A673 (cell line): ENCODE measurements at regions of chr11 and their contacts with region 1.

Region 1: GRCh38 chr11:727859-728748 is 19.2 kb upstream of the TALDO1 start:
- DNase-seq: peak; percentile 55
- H3K4me3 ChIP-seq: no peak overlapping the region
- H3K27ac ChIP-seq: no peak overlapping the region
- H3K4me1 ChIP-seq: no peaks in the 10 kb centered on the region
- H3K27me3 ChIP-seq: peaks cover 8% of the 10 kb centered on the region
- CTCF ChIP-seq: peak; percentile 91

Region 2: DNA sequence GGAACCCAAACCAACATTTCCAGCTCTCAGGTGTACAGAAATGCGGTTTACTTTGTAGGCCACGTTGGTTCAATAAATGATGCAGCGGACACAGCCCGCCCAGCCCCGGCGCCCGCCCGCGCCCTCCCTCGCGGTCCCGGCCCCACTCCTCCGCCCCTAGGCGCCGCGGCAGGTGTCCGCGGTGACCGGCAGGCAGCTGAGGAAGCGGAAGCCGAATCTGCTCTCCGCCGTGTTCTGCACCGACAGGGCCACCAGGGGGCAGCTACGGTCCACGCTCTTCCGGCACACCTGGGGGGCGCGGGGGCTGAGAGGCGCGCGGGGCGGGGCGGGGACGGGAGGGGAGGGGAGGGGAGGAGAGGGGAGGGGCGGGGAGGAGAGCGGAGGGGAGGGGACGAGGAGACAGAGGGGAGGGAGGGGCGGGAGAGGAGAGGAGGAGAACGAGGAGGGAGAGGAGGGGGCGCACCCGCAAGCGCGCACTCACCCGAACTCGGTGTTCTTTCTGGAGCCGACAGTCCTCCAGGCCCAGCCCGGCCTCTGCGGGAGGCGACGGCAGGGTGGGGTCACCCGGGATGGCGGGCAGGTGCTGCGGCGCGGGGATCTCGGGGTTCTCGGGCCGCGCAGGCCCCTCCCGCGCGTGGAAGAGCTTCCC is 173.2 kb before region 1 on chr11:
- CTCF ChIA-PET with region 1: interaction called, 3 read pairs
- POLR2A ChIA-PET with region 1: no interaction called
- intact Hi-C with region 1: loop called (anchors 10 kb)
- DNase-seq: peak; percentile 80
- H3K4me3 ChIP-seq: peak overlapping the region; percentile 50
- H3K27ac ChIP-seq: no peak overlapping the region
- H3K4me1 ChIP-seq: peaks cover 8% of the 10 kb centered on the region
- H3K27me3 ChIP-seq: peaks cover 22% of the 10 kb centered on the region
- CTCF ChIP-seq: peak; percentile 52; the same call in 1 of the 2 replicates

Region 3: DNA sequence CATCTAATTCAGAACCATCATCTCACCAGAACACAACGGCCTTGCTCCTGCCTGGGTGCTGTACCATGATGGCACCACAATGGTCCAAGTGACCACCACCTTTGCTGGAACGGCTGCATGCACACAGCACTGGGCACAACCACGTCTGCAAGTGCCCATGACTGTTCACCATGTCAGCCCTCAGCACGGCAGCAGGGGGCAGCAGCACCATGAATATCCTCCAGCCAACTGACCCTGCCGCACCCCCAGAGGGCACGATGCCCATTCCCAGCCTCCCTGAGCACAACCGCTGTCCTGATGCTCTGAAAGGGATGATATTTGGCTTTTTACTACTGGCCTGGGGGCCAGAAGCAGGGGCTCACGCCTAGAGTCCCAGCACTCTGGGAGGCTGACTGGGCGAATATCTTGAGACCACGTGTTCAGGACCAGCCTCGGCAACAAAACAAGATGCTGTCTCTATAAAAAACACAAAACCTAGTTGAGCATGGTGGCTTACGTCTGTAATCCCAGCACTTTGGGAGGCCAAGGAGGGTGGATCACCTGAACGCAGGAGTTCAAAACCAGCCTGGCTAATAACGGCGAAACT is 65.3 kb before region 1 on chr11:
- CTCF ChIA-PET with region 1: interaction called, 3 read pairs
- POLR2A ChIA-PET with region 1: no interaction called
- intact Hi-C with region 1: loop called (anchors 5 kb)
- DNase-seq: peak; percentile 41
- H3K4me3 ChIP-seq: no peak overlapping the region
- H3K27ac ChIP-seq: no peak overlapping the region
- H3K4me1 ChIP-seq: peaks cover 18% of the 10 kb centered on the region
- H3K27me3 ChIP-seq: no peaks in the 10 kb centered on the region
- CTCF ChIP-seq: peak; percentile 69

Region 4: DNA sequence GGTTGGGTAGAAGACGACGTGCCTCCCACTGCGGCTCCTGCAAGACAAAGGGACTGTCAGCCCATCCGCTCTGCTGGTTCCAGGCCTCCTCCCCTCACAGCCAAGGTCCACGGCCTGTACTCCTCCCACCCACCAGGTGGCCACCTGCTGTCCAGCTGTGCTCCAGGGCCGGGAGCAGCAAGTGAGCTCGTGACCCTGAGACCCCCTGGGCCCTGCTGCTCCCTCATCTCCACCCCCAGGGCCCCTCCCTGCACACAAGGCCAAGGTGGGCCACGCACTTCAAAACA is 142.0 kb after region 1 on chr11:
- CTCF ChIA-PET with region 1: no interaction called
- POLR2A ChIA-PET with region 1: no interaction called
- intact Hi-C with region 1: no loop called
- DNase-seq: no peak
- H3K4me3 ChIP-seq: no peak overlapping the region
- H3K27ac ChIP-seq: no peak overlapping the region
- H3K4me1 ChIP-seq: no peaks in the 10 kb centered on the region
- H3K27me3 ChIP-seq: no peaks in the 10 kb centered on the region
- CTCF ChIP-seq: no peak